GM12878 (cell line): ENCODE measurements at regions of chr5 and their contacts with region 1.

Region 1: DNA sequence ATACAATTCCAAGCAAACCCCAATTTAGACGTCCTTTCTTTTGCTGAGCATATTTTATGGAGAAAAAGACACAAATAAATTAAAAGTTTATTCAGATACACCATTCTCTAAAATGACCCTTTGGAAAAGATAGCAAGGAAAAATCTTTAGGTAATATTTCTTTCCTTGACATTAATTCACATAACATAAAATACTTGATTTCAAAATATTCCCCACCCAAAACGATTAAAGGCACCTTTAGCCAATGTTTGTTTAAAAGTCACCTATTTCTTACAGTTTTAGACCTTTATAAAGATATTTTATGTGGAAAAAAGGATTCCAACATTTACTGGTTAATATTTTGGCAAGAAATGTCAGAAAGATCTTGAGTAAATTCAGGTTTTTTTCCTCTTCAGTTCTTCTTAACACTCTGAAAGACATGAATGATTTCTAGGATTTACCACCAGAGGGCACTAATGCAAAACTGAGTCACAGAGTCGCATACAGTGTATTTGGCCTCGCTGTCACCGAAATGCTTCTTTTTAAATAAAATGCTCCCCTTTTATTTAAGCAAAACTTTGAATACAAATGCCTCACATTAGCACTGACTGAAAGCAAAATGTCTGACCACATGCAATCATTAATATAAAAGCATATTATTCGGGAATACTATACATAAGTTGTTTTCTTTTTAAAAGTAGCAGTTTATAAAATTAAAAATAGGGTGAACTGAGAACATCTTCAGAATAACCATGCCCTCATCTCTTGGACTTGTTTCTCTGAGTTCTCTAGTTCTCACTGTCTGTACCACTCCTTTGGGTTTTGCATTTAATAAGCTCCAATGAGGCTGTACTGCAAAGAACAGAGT is 122.5 kb downstream of the SLC1A3 start:
- DNase-seq: no peak
- ATAC-seq: 0 out of 3 replicates have a peak, but pooled peaks have one; percentile 11
- H3K4me3 ChIP-seq: no peak overlapping the region
- H3K27ac ChIP-seq: no peak overlapping the region
- H3K4me1 ChIP-seq: peaks cover 12% of the 10 kb centered on the region
- H3K27me3 ChIP-seq: no peaks in the 10 kb centered on the region
- CTCF ChIP-seq: peak; percentile 61 to 67 (median 65)
- EP300 ChIP-seq: no peak
- POLR2A ChIP-seq: no peak
- RAD21 ChIP-seq: peak; percentile 48

Region 2: GRCh38 chr5:36162810-36163486 is 566.0 kb before region 1 on chr5:
- CTCF ChIA-PET with region 1: no interaction called
- POLR2A ChIA-PET with region 1: no interaction called
- RAD21 ChIA-PET with region 1: no interaction called
- SMC1A ChIA-PET with region 1: no interaction called
- in situ Hi-C with region 1: no loop called
- intact Hi-C with region 1: no loop called
- DNase-seq: no peak
- ATAC-seq: no peak
- H3K4me3 ChIP-seq: no peak overlapping the region
- H3K27ac ChIP-seq: no peak overlapping the region
- H3K4me1 ChIP-seq: 0 out of 2 replicates have a peak, but pooled peaks cover 3% of the 10 kb centered on the region
- H3K27me3 ChIP-seq: no peaks in the 10 kb centered on the region
- CTCF ChIP-seq: no peak
- EP300 ChIP-seq: no peak
- POLR2A ChIP-seq: no peak
- RAD21 ChIP-seq: no peak

Region 3: DNA sequence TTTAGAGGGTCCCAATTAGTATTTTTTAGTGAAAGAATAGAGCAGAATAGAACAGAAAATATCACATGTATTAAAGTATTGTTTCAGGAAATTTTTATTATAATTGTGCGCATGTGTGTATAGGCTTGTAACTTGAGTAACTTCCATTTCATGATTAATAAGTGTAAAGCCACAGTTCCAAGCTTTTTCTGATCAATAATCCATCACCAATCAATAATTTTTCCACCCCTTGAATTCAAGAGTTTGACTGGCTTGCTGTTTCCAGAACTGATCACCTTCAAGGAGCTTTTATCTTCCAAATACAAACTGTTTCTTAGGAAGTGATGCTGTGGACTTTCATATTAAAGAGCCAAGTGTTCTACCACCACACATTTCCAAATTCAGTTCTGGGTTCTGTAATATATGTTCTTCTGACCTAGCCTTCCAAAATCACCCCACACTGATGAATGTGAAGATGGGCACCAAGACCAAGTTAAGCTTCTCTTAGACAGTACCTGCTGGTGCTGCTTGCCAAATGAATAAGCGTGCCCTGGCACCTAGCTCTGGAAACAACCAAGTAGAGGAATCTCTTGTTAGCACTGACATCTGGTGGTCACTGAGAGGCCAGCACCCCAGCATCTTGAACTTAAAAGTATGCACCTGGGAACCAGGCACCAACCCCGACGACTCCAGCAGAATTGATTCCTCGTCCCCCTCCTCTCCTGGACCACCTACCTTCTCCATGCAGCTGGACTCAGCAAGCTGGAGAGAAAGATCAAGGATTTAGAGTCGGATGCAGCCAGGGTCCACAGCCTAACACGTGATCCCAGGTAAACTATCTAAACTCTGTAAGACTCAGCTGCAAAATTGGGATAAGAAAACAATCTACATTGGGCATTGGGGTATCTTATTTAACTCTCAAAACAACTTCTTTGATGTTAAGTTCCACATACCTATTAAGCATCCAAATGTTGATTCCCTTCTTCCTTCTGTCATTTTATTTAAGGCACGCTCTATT is 32.9 kb before region 1 on chr5:
- CTCF ChIA-PET with region 1: interaction called, 202 read pairs
- POLR2A ChIA-PET with region 1: interaction called, 33 read pairs
- RAD21 ChIA-PET with region 1: interaction called, 65 read pairs
- SMC1A ChIA-PET with region 1: interaction called, 176 read pairs
- in situ Hi-C with region 1: no loop called
- intact Hi-C with region 1: loop called (anchors 2 kb)
- DNase-seq: no peak
- ATAC-seq: peak; percentile 76
- H3K4me3 ChIP-seq: no peak overlapping the region
- H3K27ac ChIP-seq: no peak overlapping the region
- H3K4me1 ChIP-seq: peaks cover 13% of the 10 kb centered on the region
- H3K27me3 ChIP-seq: no peaks in the 10 kb centered on the region
- CTCF ChIP-seq: peak; percentile 72 to 82 (median 77)
- EP300 ChIP-seq: no peak
- POLR2A ChIP-seq: no peak
- RAD21 ChIP-seq: peak; percentile 52; the same call in 1 of the 2 replicates

Region 4: GRCh38 chr5:36708996-36709395 is 19.9 kb before region 1 on chr5:
- CTCF ChIA-PET with region 1: interaction called, 13 read pairs
- POLR2A ChIA-PET with region 1: interaction called, 6 read pairs
- RAD21 ChIA-PET with region 1: interaction called, 5 read pairs
- SMC1A ChIA-PET with region 1: interaction called, 17 read pairs
- in situ Hi-C with region 1: no loop called
- intact Hi-C with region 1: no loop called
- DNase-seq: no peak
- ATAC-seq: no peak
- H3K4me3 ChIP-seq: no peak overlapping the region
- H3K27ac ChIP-seq: no peak overlapping the region
- H3K4me1 ChIP-seq: no peaks in the 10 kb centered on the region
- H3K27me3 ChIP-seq: no peaks in the 10 kb centered on the region
- CTCF ChIP-seq: no peak
- EP300 ChIP-seq: no peak
- POLR2A ChIP-seq: no peak
- RAD21 ChIP-seq: no peak

Region 5: GRCh38 chr5:36739751-36740221 is 10.9 kb after region 1 on chr5:
- CTCF ChIA-PET with region 1: interaction called, 63 read pairs
- POLR2A ChIA-PET with region 1: no interaction called
- RAD21 ChIA-PET with region 1: interaction called, 10 read pairs
- SMC1A ChIA-PET with region 1: interaction called, 14 read pairs
- in situ Hi-C with region 1: no loop called
- intact Hi-C with region 1: no loop called
- DNase-seq: no peak
- ATAC-seq: peak; percentile 84
- H3K4me3 ChIP-seq: no peak overlapping the region
- H3K27ac ChIP-seq: no peak overlapping the region
- H3K4me1 ChIP-seq: no peaks in the 10 kb centered on the region
- H3K27me3 ChIP-seq: no peaks in the 10 kb centered on the region
- CTCF ChIP-seq: peak; percentile 85 to 96 (median 93)
- EP300 ChIP-seq: no peak
- POLR2A ChIP-seq: no peak
- RAD21 ChIP-seq: peak; percentile 84

Region 6: DNA sequence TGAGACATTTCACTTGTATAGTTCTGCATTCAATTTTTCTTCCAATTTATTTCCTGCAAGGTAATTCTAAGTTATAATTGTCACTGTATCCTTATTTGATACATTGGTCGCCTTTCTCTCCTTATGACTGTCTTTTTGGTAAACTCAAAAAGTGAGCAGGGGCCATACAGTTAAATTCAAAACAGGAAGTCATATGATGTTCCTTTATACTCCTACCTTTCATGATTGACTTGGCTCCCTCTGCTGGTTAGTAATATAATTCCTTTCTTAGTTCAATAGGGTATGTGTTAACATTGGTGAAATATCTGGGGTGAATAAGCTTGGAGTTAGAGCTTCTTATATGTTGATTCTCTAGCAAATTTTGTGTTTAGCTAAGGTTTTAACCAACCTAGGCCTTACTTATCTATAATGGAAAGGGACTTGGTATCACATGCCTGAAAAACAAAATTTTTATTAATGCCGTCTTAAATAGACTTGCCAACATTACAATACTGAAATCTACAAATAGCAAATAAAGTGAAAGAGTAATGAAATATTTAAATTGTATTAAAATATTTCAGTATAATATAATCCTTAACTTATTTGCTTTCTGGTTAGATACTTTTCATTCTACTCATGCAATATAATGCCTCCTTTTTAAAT is 141.6 kb after region 1 on chr5:
- CTCF ChIA-PET with region 1: interaction called, 29 read pairs
- POLR2A ChIA-PET with region 1: interaction called, 5 read pairs
- RAD21 ChIA-PET with region 1: interaction called, 18 read pairs
- SMC1A ChIA-PET with region 1: interaction called, 30 read pairs
- in situ Hi-C with region 1: no loop called
- intact Hi-C with region 1: loop called (anchors 5 kb)
- DNase-seq: no peak
- ATAC-seq: peak; percentile 79
- H3K4me3 ChIP-seq: no peak overlapping the region
- H3K27ac ChIP-seq: no peak overlapping the region
- H3K4me1 ChIP-seq: peaks cover 7% of the 10 kb centered on the region; the same call in 1 of the 2 replicates
- H3K27me3 ChIP-seq: no peaks in the 10 kb centered on the region
- CTCF ChIP-seq: peak; percentile 36 to 66 (median 58); a peak in 5 of 6 replicates
- EP300 ChIP-seq: no peak
- POLR2A ChIP-seq: no peak
- RAD21 ChIP-seq: peak; percentile 59

Region 7: GRCh38 chr5:36944607-36945225 is 215.8 kb after region 1 on chr5:
- CTCF ChIA-PET with region 1: interaction called, 6 read pairs
- POLR2A ChIA-PET with region 1: interaction called, 10 read pairs
- RAD21 ChIA-PET with region 1: interaction called, 6 read pairs
- SMC1A ChIA-PET with region 1: interaction called, 3 read pairs
- in situ Hi-C with region 1: no loop called
- intact Hi-C with region 1: no loop called
- DNase-seq: no peak
- ATAC-seq: peak; percentile 38
- H3K4me3 ChIP-seq: no peak overlapping the region
- H3K27ac ChIP-seq: no peak overlapping the region
- H3K4me1 ChIP-seq: no peaks in the 10 kb centered on the region
- H3K27me3 ChIP-seq: no peaks in the 10 kb centered on the region
- CTCF ChIP-seq: peak in 2 of 3 experiments; percentile 44 to 47; a peak in 3 of 6 replicates
- EP300 ChIP-seq: no peak
- POLR2A ChIP-seq: no peak
- RAD21 ChIP-seq: peak; percentile 38; the same call in 1 of the 2 replicates

Region 8: GRCh38 chr5:37208883-37209797 is 480.2 kb after region 1 on chr5:
- CTCF ChIA-PET with region 1: no interaction called
- POLR2A ChIA-PET with region 1: no interaction called
- RAD21 ChIA-PET with region 1: no interaction called
- SMC1A ChIA-PET with region 1: no interaction called
- in situ Hi-C with region 1: no loop called
- intact Hi-C with region 1: loop called (anchors 10 kb)
- DNase-seq: no peak
- ATAC-seq: no peak
- H3K4me3 ChIP-seq: no peak overlapping the region
- H3K27ac ChIP-seq: no peak overlapping the region
- H3K4me1 ChIP-seq: peaks cover under 1% of the 10 kb centered on the region
- H3K27me3 ChIP-seq: no peaks in the 10 kb centered on the region
- CTCF ChIP-seq: no peak
- EP300 ChIP-seq: no peak
- POLR2A ChIP-seq: peak; percentile 40; the same call in 1 of the 2 replicates
- RAD21 ChIP-seq: no peak